MCF 10A (cell line): ENCODE measurements at regions of chr2 and their contacts with region 1.

Region 1: DNA sequence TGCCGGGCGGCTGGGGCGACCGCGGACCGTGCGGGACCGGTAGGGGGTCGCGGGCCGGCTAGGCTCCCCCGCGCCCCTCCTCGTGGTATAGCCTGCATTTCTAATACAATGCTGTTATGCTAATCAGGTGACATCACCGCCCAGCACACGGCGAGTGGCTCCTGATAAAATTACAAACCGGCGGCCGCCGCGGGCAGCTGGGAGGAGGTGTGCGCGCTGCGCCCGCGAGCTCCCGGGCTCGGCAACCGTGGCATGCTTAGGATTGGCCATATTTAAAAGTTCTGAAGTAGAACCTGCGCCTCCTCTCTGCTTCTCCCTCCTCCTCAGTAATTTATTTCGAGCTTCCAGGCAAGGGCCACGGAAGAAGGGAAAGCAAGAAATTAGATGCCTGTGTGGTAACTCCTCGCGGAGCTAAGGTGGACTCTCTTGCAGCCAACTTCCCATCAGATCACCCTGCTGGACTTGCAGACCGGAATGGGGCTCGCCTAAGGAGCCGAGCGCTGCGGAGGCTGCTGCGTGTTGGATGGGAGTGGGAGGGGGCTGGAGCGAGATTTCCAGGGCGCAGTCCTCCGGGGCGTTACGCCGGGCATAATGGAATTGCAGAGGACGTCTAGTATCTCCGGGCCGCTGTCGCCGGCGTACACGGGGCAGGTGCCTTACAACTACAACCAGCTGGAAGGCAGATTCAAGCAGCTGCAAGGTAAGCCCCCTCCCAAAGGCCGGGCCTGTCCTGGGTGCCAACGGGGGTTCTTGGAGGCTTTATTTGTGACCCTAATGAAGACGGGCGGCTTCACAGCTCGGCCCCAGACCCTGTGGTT is 102.3 kb downstream of the SPTBN1 start:
- DNase-seq: peak; percentile 85
- H3K4me3 Mint-ChIP-seq: peak overlapping the region; percentile 87
- H3K27ac Mint-ChIP-seq: peak overlapping the region; percentile 96
- H3K4me1 Mint-ChIP-seq: peaks cover 42% of the 10 kb centered on the region
- H3K27me3 Mint-ChIP-seq: no peaks in the 10 kb centered on the region
- CTCF ChIP-seq: no peak

Region 2: DNA sequence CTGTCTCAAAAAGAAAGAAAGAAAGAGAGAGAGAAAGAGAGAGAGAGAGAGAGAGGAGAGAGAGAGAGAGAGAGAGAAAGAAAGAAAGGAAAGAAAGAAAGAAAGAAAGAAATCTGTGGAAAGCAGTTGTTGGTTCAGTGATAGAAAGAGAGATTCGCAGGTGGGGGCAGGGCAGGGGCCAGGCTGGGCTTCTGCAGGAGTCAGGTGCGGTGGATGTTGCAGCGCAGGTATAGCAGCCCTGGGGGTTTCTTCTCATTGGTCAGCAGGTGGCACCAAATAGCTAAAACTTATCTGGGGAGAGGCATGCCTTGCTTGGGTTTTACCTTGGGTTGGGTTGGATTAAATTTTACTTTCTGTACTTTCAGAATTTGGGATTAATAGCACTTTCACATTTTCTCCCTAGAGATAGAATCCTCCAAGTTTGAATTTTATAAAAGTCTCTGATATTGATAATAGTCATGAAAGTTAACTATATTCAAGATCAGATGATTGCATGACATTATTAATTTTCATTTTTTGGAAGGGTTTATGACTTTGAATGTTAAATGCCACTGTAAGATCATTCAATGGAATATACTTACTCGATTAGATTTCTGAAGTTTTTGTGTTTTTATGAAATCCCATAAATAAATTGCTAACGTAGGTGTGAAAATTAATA is 35.6 kb before region 1 on chr2:
- CTCF ChIA-PET with region 1: interaction called, 32 read pairs
- POLR2A ChIA-PET with region 1: interaction called, 249 read pairs
- intact Hi-C with region 1: loop called (anchors 1 kb)
- DNase-seq: peak; percentile 92
- H3K4me3 Mint-ChIP-seq: no peak overlapping the region
- H3K27ac Mint-ChIP-seq: no peak overlapping the region
- H3K4me1 Mint-ChIP-seq: peaks cover 27% of the 10 kb centered on the region
- H3K27me3 Mint-ChIP-seq: no peaks in the 10 kb centered on the region
- CTCF ChIP-seq: peak; percentile 67

Region 3: GRCh38 chr2:54570925-54571694 is 12.7 kb after region 1 on chr2:
- CTCF ChIA-PET with region 1: interaction called, 21 read pairs
- POLR2A ChIA-PET with region 1: interaction called, 427 read pairs
- intact Hi-C with region 1: loop called (anchors 1 kb)
- DNase-seq: peak; percentile 87
- H3K4me3 Mint-ChIP-seq: peak overlapping the region; percentile 63
- H3K27ac Mint-ChIP-seq: peak overlapping the region; percentile 94
- H3K4me1 Mint-ChIP-seq: peaks cover 68% of the 10 kb centered on the region
- H3K27me3 Mint-ChIP-seq: no peaks in the 10 kb centered on the region
- CTCF ChIP-seq: no peak

Region 4: GRCh38 chr2:54597153-54597848 is 38.9 kb after region 1 on chr2:
- CTCF ChIA-PET with region 1: interaction called, 6 read pairs
- POLR2A ChIA-PET with region 1: interaction called, 80 read pairs
- intact Hi-C with region 1: loop called (anchors 1 kb)
- DNase-seq: peak; percentile 27
- H3K4me3 Mint-ChIP-seq: no peak overlapping the region
- H3K27ac Mint-ChIP-seq: peak overlapping the region; percentile 57
- H3K4me1 Mint-ChIP-seq: peaks cover 40% of the 10 kb centered on the region
- H3K27me3 Mint-ChIP-seq: no peaks in the 10 kb centered on the region
- CTCF ChIP-seq: no peak

Region 5: DNA sequence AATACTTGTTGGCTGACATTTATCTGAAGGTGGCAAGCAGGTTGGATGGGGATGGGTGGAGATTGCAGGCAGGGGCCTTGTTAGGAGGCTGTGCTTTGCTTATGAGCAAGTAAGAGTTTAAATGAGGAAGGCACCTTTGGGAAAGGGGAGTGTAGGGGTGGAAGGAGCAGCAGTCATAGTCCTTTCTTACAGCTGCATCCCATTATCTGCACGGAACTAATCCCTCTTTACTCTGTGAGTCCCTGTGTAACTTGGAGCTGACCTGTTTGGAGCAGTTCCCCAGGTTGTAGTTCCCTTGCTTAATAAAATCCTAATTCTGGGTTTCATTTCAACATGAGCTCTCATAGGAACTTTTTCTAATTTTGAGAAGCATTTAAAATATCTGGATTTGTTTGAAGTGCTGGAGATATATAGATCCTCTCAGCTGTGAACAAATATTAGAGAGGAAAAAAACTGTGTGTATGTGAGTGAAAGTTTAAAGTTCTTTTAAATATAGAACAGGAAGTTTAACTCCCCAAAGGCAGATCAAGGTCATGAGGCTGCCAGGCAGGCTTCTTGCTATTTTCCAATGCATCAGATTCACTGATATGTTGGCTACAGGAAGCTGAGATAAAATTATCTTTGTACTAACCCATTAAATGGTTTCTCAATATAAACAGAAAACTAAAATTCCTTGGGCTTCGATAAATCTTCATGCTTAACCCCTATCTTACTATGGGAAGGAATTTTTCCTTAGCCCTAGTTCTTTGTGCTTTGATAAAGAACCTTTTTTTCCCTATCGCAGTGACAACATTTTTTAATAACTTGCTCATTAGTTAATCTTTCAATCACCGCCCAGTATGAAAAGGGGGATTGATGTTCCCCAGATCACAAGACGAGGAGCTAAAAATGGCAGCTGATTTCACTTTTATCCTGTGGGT is 60.5 kb after region 1 on chr2:
- CTCF ChIA-PET with region 1: interaction called, 4 read pairs
- POLR2A ChIA-PET with region 1: interaction called, 18 read pairs
- intact Hi-C with region 1: loop called (anchors 2 kb)
- DNase-seq: no peak
- H3K4me3 Mint-ChIP-seq: no peak overlapping the region
- H3K27ac Mint-ChIP-seq: peak overlapping the region; percentile 7
- H3K4me1 Mint-ChIP-seq: peaks cover 17% of the 10 kb centered on the region
- H3K27me3 Mint-ChIP-seq: no peaks in the 10 kb centered on the region
- CTCF ChIP-seq: no peak